AG04450 (cell line): ENCODE measurements at regions of chr12 and their contacts with region 1.

Region 1: GRCh38 chr12:71663561-71664294 is at the start of gene ZFC3H1:
- DNase-seq: peak; percentile 98
- H3K4me3 ChIP-seq: peak within 1 kb of the TSS; percentile 96
- H3K27ac ChIP-seq: peak within 1 kb of the TSS; percentile 98
- H3K27me3 ChIP-seq: no peaks in the 10 kb centered on the region
- CTCF ChIP-seq: peak; percentile 45
- polyA plus RNA-seq, gene ZFC3H1: 38.4 and 55.5 TPM in 2 replicates

Region 2: DNA sequence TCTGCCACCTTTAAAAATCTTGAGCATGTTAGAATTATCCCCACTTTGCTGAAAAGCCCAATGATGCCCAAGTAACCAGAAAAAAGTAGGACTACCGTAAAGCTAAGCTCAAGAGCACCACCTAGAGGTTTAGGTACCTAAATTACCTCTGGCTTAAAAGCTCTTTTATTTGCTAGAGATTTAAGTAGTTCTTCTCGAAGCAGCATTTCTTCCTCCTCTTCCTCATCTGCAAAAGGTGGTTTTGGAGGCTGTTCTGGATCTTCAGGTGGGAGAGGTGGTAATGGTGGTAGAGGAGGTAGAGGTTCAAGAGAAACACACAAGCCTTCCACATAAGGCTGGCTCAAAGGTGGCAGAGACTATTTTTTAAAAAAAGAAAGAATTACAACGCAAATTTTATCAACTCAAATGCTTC is 27.0 kb before region 1 on chr12:
- CTCF ChIA-PET with region 1: interaction called, 13 read pairs
- POLR2A ChIA-PET with region 1: interaction called, 4 read pairs
- DNase-seq: peak; percentile 27
- H3K4me3 ChIP-seq: no peak overlapping the region
- H3K27ac ChIP-seq: no peak overlapping the region
- H3K27me3 ChIP-seq: no peaks in the 10 kb centered on the region
- CTCF ChIP-seq: peak; percentile 74

Region 3: DNA sequence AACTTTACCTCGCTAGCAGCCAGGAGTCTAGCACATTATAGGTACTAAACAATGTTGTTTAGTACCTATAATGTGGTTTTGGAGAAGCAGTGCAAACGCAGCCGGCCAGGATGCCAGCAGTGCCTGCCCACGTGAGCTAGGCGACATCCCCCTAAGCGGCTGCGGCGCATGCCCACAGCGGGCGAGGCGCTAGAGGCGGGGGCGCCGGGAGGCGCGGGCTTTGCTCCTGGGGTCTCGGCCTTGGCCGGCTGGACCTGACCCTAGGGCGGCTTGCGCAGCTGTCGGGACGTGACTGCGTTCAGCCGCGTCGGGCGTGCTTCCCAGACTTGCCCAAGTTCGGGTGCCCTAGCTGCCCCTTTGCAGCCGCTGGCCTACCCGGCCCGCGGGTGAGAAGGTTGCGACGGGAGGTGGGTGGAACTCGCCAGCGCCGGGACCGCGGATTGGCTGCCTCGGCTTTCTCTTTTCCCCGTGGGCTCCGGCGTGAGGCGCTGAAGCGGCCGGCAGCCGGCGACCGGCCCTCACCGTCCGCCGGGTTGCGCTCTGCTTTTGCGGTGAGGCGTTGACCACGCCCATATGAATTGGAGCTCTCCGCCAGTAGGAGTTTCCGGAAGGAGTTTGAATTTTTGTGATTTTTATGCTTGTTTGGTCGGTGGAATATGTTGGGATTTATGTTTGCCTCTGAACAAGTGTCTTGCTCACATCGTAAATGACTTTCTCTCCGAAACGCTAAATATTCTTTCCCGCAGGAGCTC is 22.4 kb after region 1 on chr12 and contains the start of gene TMEM19:
- CTCF ChIA-PET with region 1: interaction called, 26 read pairs
- POLR2A ChIA-PET with region 1: interaction called, 41 read pairs
- DNase-seq: peak; percentile 62
- H3K4me3 ChIP-seq: peak within 1 kb of the TSS; percentile 84
- H3K27ac ChIP-seq: no peak within 1 kb of the TSS
- H3K27me3 ChIP-seq: no peaks in the 10 kb centered on the region
- CTCF ChIP-seq: peak; percentile 36
- polyA plus RNA-seq, gene TMEM19: 18.8 and 23.3 TPM in 2 replicates

Region 4: DNA sequence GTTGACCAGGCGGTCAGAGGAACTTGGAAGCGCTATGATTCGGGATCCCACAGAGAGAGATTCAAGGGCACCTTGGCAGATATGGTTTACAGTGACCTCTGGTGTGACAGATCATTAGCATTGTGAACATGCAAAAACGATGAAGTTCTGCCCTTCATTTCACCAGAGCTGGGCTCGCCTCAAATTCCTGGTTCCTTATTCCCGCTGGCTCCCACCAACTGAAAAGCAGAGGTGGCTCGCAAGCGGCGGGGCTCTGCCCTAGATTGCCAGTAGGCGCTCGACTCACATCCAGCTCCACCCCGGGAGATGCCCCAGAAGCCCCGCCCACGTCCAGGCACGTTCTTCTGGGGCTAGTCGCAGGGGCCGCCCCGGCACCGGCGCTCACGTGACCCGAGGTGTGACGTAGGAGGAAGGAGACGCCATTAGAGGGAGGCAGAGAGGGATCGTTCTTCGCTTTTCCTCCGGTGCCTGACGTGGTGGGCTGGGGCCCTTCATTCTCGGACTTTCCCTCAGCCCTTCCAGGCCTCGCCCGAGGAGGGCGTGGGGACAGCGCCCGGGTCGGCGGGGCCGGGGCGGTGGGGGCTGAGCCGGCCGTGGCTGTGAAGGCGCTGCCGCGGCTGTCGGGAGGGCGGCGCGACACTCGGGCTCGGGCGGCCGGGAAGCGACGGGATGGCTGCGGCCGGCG is 90.9 kb after region 1 on chr12 and contains the start of gene RAB21:
- CTCF ChIA-PET with region 1: interaction called, 4 read pairs
- POLR2A ChIA-PET with region 1: interaction called, 11 read pairs
- DNase-seq: peak; percentile 88
- H3K4me3 ChIP-seq: peak within 1 kb of the TSS; percentile 89
- H3K27ac ChIP-seq: peak within 1 kb of the TSS; percentile 85
- H3K27me3 ChIP-seq: peaks cover 12% of the 10 kb centered on the region
- CTCF ChIP-seq: peak; percentile 34
- polyA plus RNA-seq, gene RAB21: 15.6 and 18.6 TPM in 2 replicates

Region 5: DNA sequence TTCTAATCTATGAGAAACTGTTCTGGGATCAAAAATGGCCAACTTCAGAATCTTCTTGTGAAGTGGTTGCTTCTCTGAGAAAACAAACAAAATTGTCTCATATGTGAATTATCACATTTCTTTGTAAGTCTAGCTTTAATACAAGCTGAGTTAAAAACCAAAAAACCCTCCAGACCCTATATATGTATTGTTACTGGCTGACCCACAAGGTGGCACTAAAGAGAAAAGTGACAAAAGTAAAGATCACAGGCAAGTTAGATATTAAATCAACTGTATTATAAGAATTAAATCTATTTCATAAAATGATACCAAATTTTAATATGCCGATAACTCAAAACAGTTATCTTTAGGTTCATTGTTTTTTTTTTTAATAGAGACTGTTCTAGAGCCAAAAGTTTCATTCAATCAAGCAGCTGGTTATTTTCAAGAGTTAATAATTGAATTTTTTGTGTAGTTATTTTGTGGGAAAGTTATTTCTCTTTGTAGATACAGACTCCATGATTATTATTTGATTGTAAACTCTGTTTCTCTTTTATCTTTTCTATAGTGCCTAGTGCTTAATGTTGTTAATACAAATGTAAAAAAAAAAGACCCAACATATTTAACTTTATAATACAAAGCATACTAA is 600.9 kb after region 1 on chr12:
- CTCF ChIA-PET with region 1: no interaction called
- POLR2A ChIA-PET with region 1: no interaction called
- DNase-seq: no peak
- H3K4me3 ChIP-seq: no peak overlapping the region
- H3K27ac ChIP-seq: no peak overlapping the region
- H3K27me3 ChIP-seq: no peaks in the 10 kb centered on the region
- CTCF ChIP-seq: peak; percentile 59